ENCODE measurements at regions of chr11 and their contacts with region 1.

Region 1: GRCh38 chr11:69546735-69547370 is 65.4 kb downstream of the LINC01488 start:
- DNase-seq: no peak

Region 2: DNA sequence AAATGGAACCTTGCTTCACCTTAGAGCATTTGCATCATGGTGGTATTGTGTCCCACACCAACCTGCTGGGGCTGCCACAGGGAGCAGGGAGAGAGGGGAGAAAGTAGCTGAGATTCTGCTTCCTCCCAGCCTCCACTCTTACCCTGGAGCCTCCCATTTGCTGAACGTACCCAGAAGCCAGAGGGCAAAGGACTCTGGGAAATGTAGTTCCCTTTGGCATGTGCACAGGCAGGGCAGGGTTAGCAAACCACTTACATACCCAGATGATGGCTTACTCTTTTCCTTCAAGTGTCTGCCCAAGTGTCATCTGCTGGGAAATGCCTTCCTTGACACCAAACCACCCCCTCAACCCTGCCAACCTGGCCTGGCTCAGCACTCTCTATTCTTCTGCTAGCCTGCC is 374.2 kb before region 1 on chr11:
- in situ Hi-C with region 1: no loop called
- DNase-seq: peak; percentile 84

Region 3: GRCh38 chr11:69455969-69456368 is 90.9 kb before region 1 on chr11:
- in situ Hi-C with region 1: loop called (anchors 5 kb)
- DNase-seq: no peak

Region 4: DNA sequence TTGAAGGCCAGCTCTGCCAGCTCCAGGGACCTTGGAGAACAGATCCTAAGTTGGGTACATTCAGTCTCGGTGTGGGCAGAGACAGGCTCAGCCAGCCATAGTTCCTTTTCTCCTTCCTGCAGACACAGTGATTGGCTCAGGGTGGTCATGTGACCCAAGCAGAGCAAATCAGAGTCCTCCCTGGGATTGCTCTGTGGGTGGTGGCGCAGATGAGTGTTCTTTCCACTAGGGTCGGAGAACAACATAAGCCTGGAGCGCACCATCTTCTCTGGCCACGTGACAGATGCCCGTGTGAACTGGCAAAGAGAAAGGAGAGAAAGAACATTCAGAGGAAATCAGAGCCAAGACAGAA is 47.0 kb after region 1 on chr11:
- in situ Hi-C with region 1: loop called (anchors 5 kb)
- DNase-seq: peak; percentile 37

Region 5: GRCh38 chr11:69636312-69637197 is 89.7 kb after region 1 on chr11:
- in situ Hi-C with region 1: no loop called
- DNase-seq: peak; percentile 91